ENCODE measurements at regions of chr17 and their contacts with region 1.

Region 1: DNA sequence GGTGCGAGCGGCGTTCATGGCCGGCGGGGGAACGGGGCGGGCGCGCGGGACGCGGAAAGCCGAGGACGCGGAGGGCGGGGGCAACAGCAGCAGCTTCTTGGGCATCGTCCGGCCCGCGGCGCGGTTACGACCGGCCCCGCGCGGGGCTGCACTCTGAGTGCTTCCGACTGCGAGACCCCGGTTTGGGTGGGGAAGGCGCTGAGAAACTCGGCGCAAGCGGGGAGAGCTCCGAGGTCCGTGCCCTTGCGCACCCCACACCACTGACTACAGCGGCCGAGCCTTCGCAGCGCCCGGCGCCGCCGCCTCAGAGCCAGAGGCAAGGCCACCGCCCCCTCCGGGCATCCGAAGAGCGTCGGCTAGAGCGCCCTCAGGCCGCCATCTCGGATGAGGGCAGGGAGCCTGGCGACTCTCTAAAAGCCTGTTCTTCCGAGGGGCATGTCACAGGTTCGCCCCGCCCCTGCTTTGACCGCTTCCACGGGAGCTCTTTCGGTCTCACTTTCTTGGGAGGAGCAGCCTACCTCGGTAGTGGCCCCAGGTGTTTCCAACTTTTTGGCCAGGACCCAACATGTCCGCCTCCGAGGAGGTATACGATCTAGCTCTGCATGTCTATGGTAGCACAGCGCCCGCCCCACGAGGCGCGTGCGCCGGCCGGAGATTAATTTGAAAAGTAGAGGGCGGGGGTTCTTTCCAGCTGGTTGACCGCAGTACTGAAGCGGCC is at the start of gene PRPSAP1:
- DNase-seq: peak; percentile 89
- ATAC-seq: peak; percentile 94
- H3K4me3 Mint-ChIP-seq: peak within 1 kb of the TSS; percentile 96
- H3K27ac Mint-ChIP-seq: peak within 1 kb of the TSS; percentile 99
- H3K4me1 Mint-ChIP-seq: peaks cover 17% of the 10 kb centered on the region
- H3K27me3 Mint-ChIP-seq: peaks cover 5% of the 10 kb centered on the region
- total RNA-seq, gene PRPSAP1: 61.6 to 66.1 TPM

Region 2: GRCh38 chr17:76384222-76384986 is 30.6 kb after region 1 on chr17 and contains the start of gene SPHK1:
- POLR2A ChIA-PET with region 1: interaction called, 63 read pairs
- DNase-seq: peak; percentile 90
- ATAC-seq: peak; percentile 65
- H3K4me3 Mint-ChIP-seq: peak within 1 kb of the TSS; percentile 89
- H3K27ac Mint-ChIP-seq: peak within 1 kb of the TSS; percentile 85
- H3K4me1 Mint-ChIP-seq: peaks cover 5% of the 10 kb centered on the region
- H3K27me3 Mint-ChIP-seq: peaks cover 3% of the 10 kb centered on the region
- total RNA-seq, gene SPHK1: 3.4 to 3.9 TPM